ENCODE measurements at regions of chr1 and their contacts with region 1.

Region 1: GRCh38 chr1:67332653-67333529 is 25.2 kb downstream of the IL12RB2 start:
- DNase-seq: peak; percentile 57 to 72 (median 61)
- H3K4me3 ChIP-seq: no peak overlapping the region
- H3K4me3 Mint-ChIP-seq: peak overlapping the region in 3 of 8 donors; percentile 5 to 36 (median 27)
- H3K27ac ChIP-seq: peak overlapping the region; percentile 18
- H3K27ac Mint-ChIP-seq: peak overlapping the region; percentile 4 to 71 (median 55)
- H3K4me1 ChIP-seq: peaks cover 43% of the 10 kb centered on the region
- H3K4me1 Mint-ChIP-seq: peaks cover 23 to 44% (median 35%) of the 10 kb centered on the region in 4 donors
- H3K27me3 ChIP-seq: no peaks in the 10 kb centered on the region
- H3K27me3 Mint-ChIP-seq: no peaks in the 10 kb centered on the region

Region 2: GRCh38 chr1:67307251-67308060 is 25.4 kb before region 1 on chr1 and contains the start of gene IL12RB2:
- CTCF ChIA-PET with region 1: no interaction called
- POLR2A ChIA-PET with region 1: interaction called, 12 read pairs
- intact Hi-C with region 1: loop called (anchors 2 kb)
- DNase-seq: peak; percentile 26 to 63 (median 40)
- H3K4me3 ChIP-seq: peak within 1 kb of the TSS; percentile 14 to 63
- H3K4me3 Mint-ChIP-seq: peak within 1 kb of the TSS; percentile 83 to 94 (median 88)
- H3K27ac ChIP-seq: peak within 1 kb of the TSS; percentile 32
- H3K27ac Mint-ChIP-seq: peak within 1 kb of the TSS; percentile 39 to 92 (median 86)
- H3K4me1 ChIP-seq: peaks cover 13% of the 10 kb centered on the region
- H3K4me1 Mint-ChIP-seq: peaks cover 9 to 30% (median 15%) of the 10 kb centered on the region in 4 donors
- H3K27me3 ChIP-seq: no peaks in the 10 kb centered on the region
- H3K27me3 Mint-ChIP-seq: peaks cover 4 to 11% of the 10 kb centered on the region in 2 donors
- total RNA-seq, gene IL12RB2: 3.6 to 5.3 TPM

Region 3: GRCh38 chr1:67314696-67315095 is 18.2 kb before region 1 on chr1:
- CTCF ChIA-PET with region 1: interaction called, 3 read pairs
- POLR2A ChIA-PET with region 1: interaction called, 11 read pairs
- intact Hi-C with region 1: no loop called
- DNase-seq: peak in 1 of 5 donors; percentile 9
- H3K4me3 ChIP-seq: no peak overlapping the region
- H3K4me3 Mint-ChIP-seq: peak overlapping the region in 4 of 8 donors; percentile 21 to 31 (median 26)
- H3K27ac ChIP-seq: no peak overlapping the region
- H3K27ac Mint-ChIP-seq: peak overlapping the region in 3 of 7 donors; percentile 38 to 79 (median 78)
- H3K4me1 ChIP-seq: no peaks in the 10 kb centered on the region
- H3K4me1 Mint-ChIP-seq: peaks cover 6 to 17% (median 13%) of the 10 kb centered on the region in 4 donors
- H3K27me3 ChIP-seq: no peaks in the 10 kb centered on the region
- H3K27me3 Mint-ChIP-seq: no peaks in the 10 kb centered on the region

Region 4: DNA sequence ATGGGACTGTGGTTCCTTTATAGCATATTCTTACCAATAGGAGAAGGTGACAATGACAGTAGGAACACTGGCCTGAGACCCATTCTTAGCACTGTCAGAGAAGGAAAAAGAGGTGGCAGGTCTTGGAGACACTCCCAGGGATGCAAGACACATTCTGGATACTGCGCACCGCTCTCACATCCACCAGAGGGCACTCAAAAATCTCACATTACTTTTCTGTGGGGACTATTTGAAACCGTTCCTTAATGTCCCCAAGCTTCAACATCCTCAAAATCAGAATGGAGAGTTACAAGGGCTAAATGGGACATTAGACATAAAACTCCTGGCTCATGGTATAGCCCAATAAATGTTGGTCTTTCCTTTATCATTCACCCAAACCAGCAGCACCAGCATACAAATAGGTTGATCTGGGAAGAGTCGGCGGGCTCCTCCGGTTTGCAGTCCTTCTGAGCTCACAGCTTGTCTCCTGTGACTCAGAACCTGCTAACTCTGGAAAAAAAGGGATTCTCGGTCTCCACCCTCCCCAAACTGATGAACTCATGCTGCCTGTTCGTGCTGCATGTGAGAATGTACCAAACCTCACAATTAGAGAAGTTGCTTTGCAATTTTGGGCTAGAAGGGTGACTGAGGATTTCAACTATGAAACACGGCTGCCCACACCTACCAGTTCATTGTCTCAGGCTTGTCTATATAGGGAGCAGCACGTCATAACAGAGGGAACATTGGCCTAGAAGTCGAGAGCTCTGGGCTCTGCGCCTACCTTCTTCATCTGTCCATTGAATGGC is 15.0 kb after region 1 on chr1:
- CTCF ChIA-PET with region 1: interaction called, 10 read pairs
- POLR2A ChIA-PET with region 1: no interaction called
- intact Hi-C with region 1: no loop called
- DNase-seq: no peak
- H3K4me3 ChIP-seq: no peak overlapping the region
- H3K4me3 Mint-ChIP-seq: no peak overlapping the region
- H3K27ac ChIP-seq: no peak overlapping the region
- H3K27ac Mint-ChIP-seq: peak overlapping the region in 1 of 7 donors; percentile 39
- H3K4me1 ChIP-seq: no peaks in the 10 kb centered on the region
- H3K4me1 Mint-ChIP-seq: peaks cover 4 to 11% (median 7%) of the 10 kb centered on the region in 4 donors
- H3K27me3 ChIP-seq: no peaks in the 10 kb centered on the region
- H3K27me3 Mint-ChIP-seq: no peaks in the 10 kb centered on the region